ENCODE measurements at regions of chr4 and their contacts with region 1.

Region 1: DNA sequence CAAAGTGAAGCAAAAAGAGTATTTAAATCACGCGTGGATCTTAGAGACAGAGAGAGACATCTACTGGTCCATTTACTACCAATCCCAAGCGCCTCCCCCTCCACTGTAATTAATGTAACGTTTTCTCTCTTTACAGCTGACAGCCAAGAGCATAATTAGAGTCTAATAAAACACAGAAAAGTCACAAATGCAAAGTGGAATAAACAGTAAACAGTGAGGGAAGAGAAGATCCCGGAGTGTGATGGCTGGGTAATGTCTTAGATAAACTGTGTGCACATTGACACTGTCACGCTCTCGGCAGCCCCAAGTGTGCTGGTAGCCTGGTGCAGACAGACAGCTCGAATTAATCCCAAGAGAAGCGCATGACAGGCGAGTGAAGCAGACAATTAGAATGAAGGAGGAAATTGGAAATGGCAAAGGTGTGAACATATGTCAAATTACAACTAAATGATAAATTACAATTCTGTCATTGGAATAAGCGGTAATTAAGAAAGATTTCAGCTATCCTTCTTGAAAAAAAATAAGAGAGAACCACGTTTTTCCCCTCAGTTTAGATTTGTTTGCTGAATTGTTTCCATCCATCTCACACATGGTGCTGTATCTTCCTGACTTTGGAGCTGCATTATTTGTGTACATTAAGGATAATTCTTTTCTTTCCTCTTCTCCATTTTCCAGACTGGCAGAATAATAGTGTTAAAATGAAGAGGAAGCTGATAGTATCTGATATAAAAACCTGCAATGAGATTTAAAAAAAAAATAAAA is 100.1 kb downstream of the CXXC4 start:
- DNase-seq: peak; percentile 10 to 91 (median 42)

Region 2: GRCh38 chr4:104015680-104016253 is 378.8 kb before region 1 on chr4:
- intact Hi-C with region 1: loop called (anchors 5 kb)
- DNase-seq: peak in 2 of 10 donors; percentile 3 to 38

Region 3: DNA sequence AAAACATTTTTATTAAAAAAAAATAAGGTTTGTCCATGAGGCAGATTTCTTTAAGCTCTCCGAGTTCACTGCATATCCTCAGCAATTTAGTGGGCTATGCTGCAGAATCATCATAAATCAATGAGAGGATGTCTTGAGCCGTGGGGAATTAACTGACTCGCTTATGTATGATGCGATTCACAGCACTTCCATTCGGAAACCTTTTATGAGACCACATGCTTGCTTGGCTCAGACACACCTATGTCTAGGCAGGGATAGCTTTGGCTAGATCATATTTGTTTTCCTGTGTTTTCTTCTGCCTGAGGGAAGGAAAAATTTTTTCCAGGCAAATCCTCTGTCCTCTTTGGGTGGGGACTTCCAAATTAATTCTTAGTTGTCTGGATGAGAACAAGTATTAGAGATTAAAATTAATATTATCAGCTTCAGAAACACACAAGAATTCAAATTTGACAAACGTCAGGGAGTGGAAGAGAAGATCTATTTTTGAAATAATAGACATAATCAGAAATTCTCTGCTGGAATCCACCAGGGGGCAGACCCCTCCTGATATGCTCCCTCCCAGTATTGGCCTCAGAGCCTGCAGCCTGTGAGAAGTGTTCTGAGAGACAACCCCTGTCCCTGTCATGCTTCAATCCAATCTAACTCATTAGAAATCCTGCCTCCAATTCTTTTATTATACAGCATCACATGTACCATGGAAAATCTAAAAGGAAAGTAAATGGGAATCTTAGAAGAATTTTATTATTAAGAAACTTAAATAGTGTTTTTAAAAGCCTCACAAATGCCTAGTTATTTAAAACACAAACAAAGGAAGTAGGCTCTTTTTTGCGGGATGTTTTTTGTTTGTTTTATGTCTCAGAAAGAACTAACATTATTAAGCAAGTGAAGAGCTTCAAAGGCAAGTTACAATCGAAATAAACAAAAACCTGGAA is 329.7 kb before region 1 on chr4:
- intact Hi-C with region 1: loop called (anchors 1 kb)
- DNase-seq: peak; percentile 19 to 95 (median 64)

Region 4: DNA sequence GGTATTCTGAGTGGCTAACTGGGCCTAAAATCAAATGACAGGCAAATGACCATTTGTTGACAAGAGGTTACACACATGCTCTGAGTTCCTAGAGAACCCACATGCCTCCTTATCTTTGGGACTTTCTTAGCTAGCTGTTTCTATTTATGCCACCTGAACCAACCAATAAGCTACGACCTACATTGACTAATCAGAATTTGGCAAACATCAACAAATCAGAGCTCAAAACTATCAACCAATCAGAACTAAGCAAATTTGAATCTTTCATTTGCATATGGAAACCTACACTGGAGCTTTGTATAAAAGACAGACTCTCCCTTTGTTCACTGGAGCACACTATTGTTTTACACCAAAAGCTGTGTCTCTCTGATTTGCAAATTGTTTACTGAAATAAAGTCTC is 91.9 kb before region 1 on chr4:
- intact Hi-C with region 1: loop called (anchors 10 kb)
- DNase-seq: no peak

Measured in posterior cingulate gyrus (tissue), 11 donors.